ENCODE measurements at regions of chr5 and their contacts with region 1.

Region 1: GRCh38 chr5:139765409-139766217 is 30.0 kb upstream of the PSD2 start:
- H3K4me3 ChIP-seq: peak overlapping the region; percentile 51
- H3K27ac ChIP-seq: no peak overlapping the region; the same call in 1 of the 2 replicates
- H3K4me1 ChIP-seq: no peaks in the 10 kb centered on the region
- CTCF ChIP-seq: peak; percentile 99

Region 2: GRCh38 chr5:139633295-139634027 is 132.2 kb before region 1 on chr5:
- CTCF ChIA-PET with region 1: interaction called, 269 read pairs
- POLR2A ChIA-PET with region 1: interaction called, 5 read pairs
- H3K4me3 ChIP-seq: no peak overlapping the region
- H3K27ac ChIP-seq: no peak overlapping the region
- H3K4me1 ChIP-seq: peaks cover 2% of the 10 kb centered on the region; the same call in 1 of the 2 replicates
- CTCF ChIP-seq: peak; percentile 96

Region 3: GRCh38 chr5:139670369-139671095 is 95.1 kb before region 1 on chr5:
- CTCF ChIA-PET with region 1: interaction called, 26 read pairs
- POLR2A ChIA-PET with region 1: no interaction called
- H3K4me3 ChIP-seq: no peak overlapping the region
- H3K27ac ChIP-seq: no peak overlapping the region
- H3K4me1 ChIP-seq: peaks cover 4% of the 10 kb centered on the region; the same call in 1 of the 2 replicates
- CTCF ChIP-seq: peak; percentile 35; the same call in 1 of the 2 replicates

Region 4: GRCh38 chr5:139711067-139711905 is 54.3 kb before region 1 on chr5:
- CTCF ChIA-PET with region 1: interaction called, 14 read pairs
- POLR2A ChIA-PET with region 1: interaction called, 3 read pairs
- H3K4me3 ChIP-seq: peak overlapping the region; percentile 41
- H3K27ac ChIP-seq: peak overlapping the region; percentile 29; the same call in 1 of the 2 replicates
- H3K4me1 ChIP-seq: 0 out of 2 replicates have a peak, but pooled peaks cover 3% of the 10 kb centered on the region
- CTCF ChIP-seq: peak; percentile 21; the same call in 1 of the 2 replicates

Region 5: GRCh38 chr5:139745800-139746690 is 19.6 kb before region 1 on chr5:
- CTCF ChIA-PET with region 1: interaction called, 12 read pairs
- POLR2A ChIA-PET with region 1: interaction called, 3 read pairs
- H3K4me3 ChIP-seq: peak overlapping the region; percentile 17
- H3K27ac ChIP-seq: peak overlapping the region; percentile 67
- H3K4me1 ChIP-seq: peaks cover 16% of the 10 kb centered on the region
- CTCF ChIP-seq: no peak

Region 6: DNA sequence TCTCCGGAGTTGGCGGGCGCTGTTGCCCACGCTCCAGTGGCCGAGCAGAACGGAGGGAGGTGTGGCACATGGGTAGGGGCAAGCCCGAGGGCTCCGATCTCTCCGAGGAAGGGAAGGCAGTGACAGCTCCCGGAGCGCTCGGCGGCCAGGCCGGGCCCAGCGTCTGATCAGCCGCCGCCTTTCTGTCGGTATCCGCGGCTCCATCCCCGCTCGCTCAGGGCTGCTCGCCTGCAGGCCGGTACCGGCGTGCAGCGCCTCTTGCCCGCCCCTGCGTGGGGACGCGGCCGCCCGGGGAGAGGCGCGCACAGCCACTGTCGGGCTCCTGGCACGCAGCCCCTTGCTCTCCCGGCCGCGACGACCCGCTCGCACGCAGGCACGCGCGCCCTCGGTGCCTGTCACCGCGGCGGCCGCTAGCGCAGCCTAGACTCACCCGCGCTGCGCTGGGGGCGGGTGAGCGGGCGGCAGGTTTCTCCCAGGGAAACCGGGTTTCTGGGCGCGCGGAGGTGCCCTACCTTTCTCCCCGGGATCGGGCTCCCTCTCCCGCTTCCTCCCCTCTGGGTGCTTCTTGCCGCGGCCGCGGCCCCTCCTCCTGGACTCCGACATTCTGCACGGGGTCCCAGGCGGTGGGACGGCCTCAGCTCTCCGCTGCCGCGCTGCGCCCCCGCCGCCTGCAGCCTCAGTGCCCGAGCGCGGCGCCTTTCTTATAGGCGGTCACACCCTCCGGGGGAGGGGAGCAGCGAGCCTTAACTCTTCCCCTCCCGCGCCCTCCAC is 138.4 kb after region 1 on chr5:
- CTCF ChIA-PET with region 1: no interaction called
- POLR2A ChIA-PET with region 1: no interaction called
- H3K4me3 ChIP-seq: peak overlapping the region; percentile 43
- H3K27ac ChIP-seq: no peak overlapping the region
- H3K4me1 ChIP-seq: peaks cover 7% of the 10 kb centered on the region; the same call in 1 of the 2 replicates
- CTCF ChIP-seq: peak; percentile 59